Activated CD4-positive, alpha-beta T cell treated with anti-CD3 and anti-CD28 coated beads, Interleukin-2, amount 10 ng/mL, durations not matched to agents 24 days and 14 days (primary cell): ENCODE measurements at regions of chr10 and their contacts with region 1.

Region 1: GRCh38 chr10:102503281-102504220 is at the start of gene SUFU:
- DNase-seq: peak; percentile 99
- H3K4me3 Mint-ChIP-seq: no peak within 1 kb of the TSS
- H3K27ac Mint-ChIP-seq: peak within 1 kb of the TSS; percentile 82
- H3K4me1 Mint-ChIP-seq: peaks cover 28% of the 10 kb centered on the region
- H3K27me3 Mint-ChIP-seq: no peaks in the 10 kb centered on the region
- total RNA-seq, gene SUFU: 8.4 and 9.9 TPM in 2 replicates

Region 2: GRCh38 chr10:101818119-101818871 is 685.3 kb before region 1 on chr10 and contains the start of gene OGA:
- intact Hi-C with region 1: loop called (anchors 2 kb)
- DNase-seq: peak; percentile 99
- H3K4me3 Mint-ChIP-seq: peak within 1 kb of the TSS; percentile 89
- H3K27ac Mint-ChIP-seq: peak within 1 kb of the TSS; percentile 95
- H3K4me1 Mint-ChIP-seq: peaks cover 48% of the 10 kb centered on the region
- H3K27me3 Mint-ChIP-seq: no peaks in the 10 kb centered on the region
- total RNA-seq, gene OGA: 99.9 and 102 TPM in 2 replicates

Region 3: GRCh38 chr10:102151774-102152544 is 351.6 kb before region 1 on chr10 and contains the start of gene NOLC1:
- intact Hi-C with region 1: loop called (anchors 1 kb)
- DNase-seq: peak; percentile 100
- H3K4me3 Mint-ChIP-seq: peak within 1 kb of the TSS; percentile 99
- H3K27ac Mint-ChIP-seq: peak within 1 kb of the TSS; percentile 99
- H3K4me1 Mint-ChIP-seq: peaks cover 45% of the 10 kb centered on the region
- H3K27me3 Mint-ChIP-seq: peaks cover 2% of the 10 kb centered on the region
- total RNA-seq, gene NOLC1: 268 and 281 TPM in 2 replicates

Region 4: DNA sequence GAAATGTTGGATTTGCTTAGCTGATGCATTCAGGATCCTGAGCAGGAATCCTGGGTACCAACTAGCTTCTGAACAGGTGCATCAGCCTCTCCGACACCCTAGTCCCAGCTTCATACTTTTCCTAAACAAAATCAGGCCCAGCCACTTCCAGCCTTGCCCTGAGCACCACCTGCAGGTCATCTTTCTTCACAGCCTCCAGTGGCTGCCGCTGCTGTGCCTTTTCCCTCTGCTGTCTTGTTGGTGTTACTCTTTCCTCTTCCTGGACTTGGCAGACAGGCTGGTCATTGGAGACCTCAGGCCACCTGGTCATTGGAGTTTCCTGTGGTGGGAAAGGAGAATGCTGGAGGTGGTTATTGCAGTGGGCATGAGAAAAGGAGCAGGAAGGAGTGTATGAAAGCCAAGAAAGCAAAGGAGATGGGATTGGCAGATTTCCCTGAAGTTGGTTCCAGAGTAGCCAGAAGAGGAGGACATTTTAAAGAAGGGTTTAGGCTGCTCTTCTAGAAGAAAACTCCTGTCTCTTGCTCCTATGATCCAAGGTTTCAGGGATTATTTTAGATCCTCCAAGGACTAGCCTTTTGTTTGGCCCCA is 156.2 kb before region 1 on chr10:
- intact Hi-C with region 1: no loop called
- DNase-seq: peak; percentile 67
- H3K4me3 Mint-ChIP-seq: no peak overlapping the region
- H3K27ac Mint-ChIP-seq: peak overlapping the region; percentile 10
- H3K4me1 Mint-ChIP-seq: peaks cover 7% of the 10 kb centered on the region
- H3K27me3 Mint-ChIP-seq: no peaks in the 10 kb centered on the region

Region 5: GRCh38 chr10:102432162-102432950 is 71.2 kb before region 1 on chr10 and contains the start of gene CUEDC2:
- intact Hi-C with region 1: loop called (anchors 1 kb)
- DNase-seq: peak; percentile 100
- H3K4me3 Mint-ChIP-seq: peak within 1 kb of the TSS; percentile 85
- H3K27ac Mint-ChIP-seq: peak within 1 kb of the TSS; percentile 81
- H3K4me1 Mint-ChIP-seq: peaks cover 48% of the 10 kb centered on the region
- H3K27me3 Mint-ChIP-seq: no peaks in the 10 kb centered on the region
- total RNA-seq, gene CUEDC2: 64.2 and 67.6 TPM in 2 replicates

Region 6: GRCh38 chr10:102641880-102642735 is 138.6 kb after region 1 on chr10:
- intact Hi-C with region 1: loop called (anchors 1 kb)
- DNase-seq: peak; percentile 99
- H3K4me3 Mint-ChIP-seq: peak overlapping the region; percentile 92
- H3K27ac Mint-ChIP-seq: peak overlapping the region; percentile 92
- H3K4me1 Mint-ChIP-seq: peaks cover 18% of the 10 kb centered on the region
- H3K27me3 Mint-ChIP-seq: no peaks in the 10 kb centered on the region

Region 7: GRCh38 chr10:102802920-102803534 is 299.5 kb after region 1 on chr10:
- intact Hi-C with region 1: loop called (anchors 2 kb)
- DNase-seq: peak; percentile 73
- H3K4me3 Mint-ChIP-seq: peak overlapping the region; percentile 80
- H3K27ac Mint-ChIP-seq: peak overlapping the region; percentile 100
- H3K4me1 Mint-ChIP-seq: peaks cover 22% of the 10 kb centered on the region
- H3K27me3 Mint-ChIP-seq: no peaks in the 10 kb centered on the region